PC-9 (cell line): ENCODE measurements at regions of chr10 and their contacts with region 1.

Region 1: DNA sequence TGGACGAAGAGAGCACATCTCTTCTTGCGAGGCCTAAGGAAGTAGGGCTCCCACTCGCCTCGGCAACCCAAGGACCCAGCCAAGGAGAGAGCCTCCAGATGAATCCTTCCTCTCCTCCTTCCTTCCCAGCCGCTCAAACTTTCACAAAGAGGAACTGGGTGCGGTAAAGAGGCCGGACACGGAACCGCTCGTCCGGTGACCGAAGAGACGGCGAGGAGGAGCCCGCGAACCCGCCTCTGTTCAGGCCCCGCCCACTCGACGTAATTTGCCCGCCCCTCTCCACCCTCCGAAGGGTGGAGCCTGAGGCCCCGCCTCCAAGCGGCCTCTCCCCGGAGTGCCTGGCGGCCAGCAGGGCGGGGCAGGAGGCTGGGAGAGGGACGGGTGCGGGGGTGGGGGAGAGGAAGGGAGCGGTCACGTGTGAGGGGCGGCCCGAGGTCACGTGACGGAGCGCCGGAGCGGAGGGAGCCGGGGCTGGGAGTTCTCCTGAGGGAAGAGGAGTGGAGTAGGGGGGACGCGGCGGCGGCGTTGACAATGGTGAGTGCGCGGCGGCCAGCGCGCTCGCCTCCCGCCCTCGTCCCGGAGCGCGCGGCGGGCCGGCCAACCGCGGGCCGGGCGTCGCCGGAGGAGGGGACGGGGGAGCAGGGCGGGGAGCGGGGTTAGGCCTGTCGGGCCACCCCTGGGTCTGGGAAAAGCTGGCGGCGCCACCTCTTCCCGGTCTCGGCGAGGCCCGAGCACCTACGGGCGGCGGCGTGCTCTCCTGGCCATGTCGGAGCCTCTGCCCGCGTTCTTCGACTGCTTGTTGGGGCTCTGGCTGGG is at the start of gene VPS26A:
- DNase-seq: peak; percentile 91 to 100
- H3K4me3 ChIP-seq: peak within 1 kb of the TSS; percentile 61
- H3K27ac ChIP-seq: peak within 1 kb of the TSS; percentile 78
- H3K4me1 ChIP-seq: peaks cover 19% of the 10 kb centered on the region
- H3K27me3 ChIP-seq: no peaks in the 10 kb centered on the region
- CTCF ChIP-seq: 0 out of 2 replicates have a peak, but pooled peaks have one; percentile 20
- total RNA-seq, gene VPS26A: 90.0 and 102 TPM in 2 replicates

Region 2: DNA sequence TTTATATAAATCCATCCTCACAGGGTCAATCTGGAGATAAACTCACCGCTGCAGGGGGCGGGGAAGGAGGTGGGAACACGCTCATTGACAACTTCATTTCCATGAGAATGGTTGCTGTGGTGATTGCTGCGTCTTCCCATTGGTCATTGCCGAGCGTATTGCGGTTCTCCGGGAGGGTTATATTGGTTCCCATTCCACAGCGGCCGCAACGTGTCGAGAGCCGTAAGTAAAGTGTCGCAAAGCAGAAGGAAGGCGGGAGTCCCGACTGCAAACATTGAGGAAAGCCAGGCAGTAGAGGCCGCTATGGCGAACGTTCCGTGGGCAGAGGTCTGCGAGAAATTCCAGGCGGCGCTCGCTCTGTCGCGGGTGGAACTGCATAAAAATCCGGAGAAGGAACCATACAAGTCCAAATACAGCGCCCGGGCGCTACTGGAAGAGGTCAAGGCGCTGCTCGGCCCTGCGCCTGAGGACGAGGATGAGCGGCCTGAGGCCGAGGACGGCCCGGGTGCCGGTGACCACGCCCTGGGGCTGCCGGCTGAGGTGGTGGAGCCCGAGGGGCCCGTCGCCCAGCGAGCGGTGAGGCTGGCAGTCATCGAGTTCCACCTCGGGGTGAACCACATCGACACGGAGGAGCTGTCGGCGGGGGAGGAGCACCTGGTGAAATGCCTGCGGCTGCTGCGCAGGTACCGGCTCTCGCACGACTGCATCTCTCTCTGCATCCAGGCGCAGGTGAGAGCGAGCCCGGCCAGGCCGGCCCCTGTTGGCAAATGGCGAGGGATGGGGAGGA is 135.2 kb before region 1 on chr10 and contains the start of gene KIFBP:
- CTCF ChIA-PET with region 1: interaction called, 3 read pairs
- POLR2A ChIA-PET with region 1: interaction called, 9 read pairs
- intact Hi-C with region 1: loop called (anchors 1 kb)
- DNase-seq: peak; percentile 94 to 97
- H3K4me3 ChIP-seq: peak within 1 kb of the TSS; percentile 84
- H3K27ac ChIP-seq: 0 out of 2 replicates have a peak within 1 kb of the TSS, but pooled peaks have one; percentile 20
- H3K4me1 ChIP-seq: peaks cover 19% of the 10 kb centered on the region
- H3K27me3 ChIP-seq: no peaks in the 10 kb centered on the region
- CTCF ChIP-seq: peak; percentile 62; the same call in 1 of the 2 replicates
- total RNA-seq, gene KIFBP: 26.0 and 30.1 TPM in 2 replicates

Region 3: DNA sequence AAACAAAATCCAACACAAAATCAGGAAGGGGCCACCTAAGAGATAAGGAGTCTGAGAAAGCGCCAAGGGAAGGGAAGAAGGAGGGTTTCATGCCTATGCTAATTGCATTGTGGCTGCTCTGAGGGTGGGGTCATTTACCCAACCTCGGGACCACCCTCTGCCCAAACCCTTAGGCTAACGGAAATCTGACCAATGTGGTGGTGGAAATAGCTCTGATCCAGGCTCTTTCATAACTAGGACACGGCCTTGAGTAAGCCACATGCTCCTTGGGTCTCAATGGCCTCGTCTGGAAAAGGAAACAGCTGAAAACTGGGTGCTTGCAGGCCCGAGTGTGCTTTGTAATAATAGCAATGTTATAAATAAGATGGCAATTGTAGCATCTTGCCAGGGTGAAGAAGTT is 50.9 kb before region 1 on chr10:
- CTCF ChIA-PET with region 1: no interaction called
- POLR2A ChIA-PET with region 1: no interaction called
- intact Hi-C with region 1: no loop called
- DNase-seq: no peak
- H3K4me3 ChIP-seq: no peak overlapping the region
- H3K27ac ChIP-seq: no peak overlapping the region
- H3K4me1 ChIP-seq: no peaks in the 10 kb centered on the region
- H3K27me3 ChIP-seq: no peaks in the 10 kb centered on the region
- CTCF ChIP-seq: no peak

Region 4: DNA sequence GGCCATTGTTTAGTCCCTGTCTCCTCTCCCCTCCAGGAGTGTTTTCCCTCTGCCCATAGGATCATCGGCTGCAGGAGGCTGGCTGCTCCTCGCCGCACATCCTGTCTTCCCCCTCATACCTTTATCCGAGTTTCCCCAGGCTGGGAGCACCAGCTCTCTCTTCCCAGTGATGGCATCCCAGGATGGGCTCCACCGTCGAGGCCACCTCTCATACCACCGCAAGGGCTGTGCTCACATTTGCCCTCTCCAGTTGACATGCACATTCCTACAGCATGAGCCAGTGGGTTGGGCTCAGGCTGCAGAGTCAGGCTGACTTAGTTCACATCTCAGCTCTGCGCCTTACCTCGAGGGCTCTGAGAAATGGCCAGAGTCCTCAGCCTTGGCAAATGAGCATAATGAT is 108.3 kb after region 1 on chr10:
- CTCF ChIA-PET with region 1: no interaction called
- POLR2A ChIA-PET with region 1: interaction called, 3 read pairs
- intact Hi-C with region 1: loop called (anchors 2 kb)
- DNase-seq: peak; percentile 88 to 96
- H3K4me3 ChIP-seq: peak overlapping the region; percentile 72
- H3K27ac ChIP-seq: peak overlapping the region; percentile 96
- H3K4me1 ChIP-seq: peaks cover 73% of the 10 kb centered on the region
- H3K27me3 ChIP-seq: no peaks in the 10 kb centered on the region
- CTCF ChIP-seq: no peak

Region 5: DNA sequence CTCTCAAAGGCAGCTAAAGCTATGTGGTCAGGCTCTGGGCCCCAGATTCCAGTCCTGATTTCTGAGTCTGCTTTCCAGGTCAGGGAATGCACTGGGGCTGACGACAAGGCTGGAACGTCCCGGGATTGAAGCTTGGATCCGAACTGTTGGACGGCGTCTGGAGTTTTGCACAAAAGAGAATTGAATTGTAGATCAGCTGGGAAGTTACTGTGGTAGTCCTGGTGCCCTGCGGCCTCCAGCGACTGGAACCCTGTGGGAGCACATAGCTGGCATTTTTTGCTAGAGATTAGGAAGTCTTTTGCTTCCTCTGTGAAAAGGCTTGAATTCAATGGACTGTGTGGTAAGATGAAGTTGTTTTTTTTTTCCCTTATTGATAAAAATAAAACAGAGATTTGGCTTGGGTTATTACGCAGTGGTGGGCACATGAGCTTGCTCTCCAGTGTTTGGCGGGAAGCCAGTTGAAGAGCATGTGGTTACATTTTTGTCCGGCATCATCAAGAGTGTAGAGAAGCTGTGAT is 154.6 kb after region 1 on chr10 and contains the start of gene HK1:
- CTCF ChIA-PET with region 1: interaction called, 10 read pairs
- POLR2A ChIA-PET with region 1: no interaction called
- intact Hi-C with region 1: no loop called
- DNase-seq: no peak
- H3K4me3 ChIP-seq: no peak within 1 kb of the TSS
- H3K27ac ChIP-seq: no peak within 1 kb of the TSS
- H3K4me1 ChIP-seq: no peaks in the 10 kb centered on the region
- H3K27me3 ChIP-seq: no peaks in the 10 kb centered on the region
- CTCF ChIP-seq: no peak
- total RNA-seq, gene HK1: 128 and 140 TPM in 2 replicates

Region 6: DNA sequence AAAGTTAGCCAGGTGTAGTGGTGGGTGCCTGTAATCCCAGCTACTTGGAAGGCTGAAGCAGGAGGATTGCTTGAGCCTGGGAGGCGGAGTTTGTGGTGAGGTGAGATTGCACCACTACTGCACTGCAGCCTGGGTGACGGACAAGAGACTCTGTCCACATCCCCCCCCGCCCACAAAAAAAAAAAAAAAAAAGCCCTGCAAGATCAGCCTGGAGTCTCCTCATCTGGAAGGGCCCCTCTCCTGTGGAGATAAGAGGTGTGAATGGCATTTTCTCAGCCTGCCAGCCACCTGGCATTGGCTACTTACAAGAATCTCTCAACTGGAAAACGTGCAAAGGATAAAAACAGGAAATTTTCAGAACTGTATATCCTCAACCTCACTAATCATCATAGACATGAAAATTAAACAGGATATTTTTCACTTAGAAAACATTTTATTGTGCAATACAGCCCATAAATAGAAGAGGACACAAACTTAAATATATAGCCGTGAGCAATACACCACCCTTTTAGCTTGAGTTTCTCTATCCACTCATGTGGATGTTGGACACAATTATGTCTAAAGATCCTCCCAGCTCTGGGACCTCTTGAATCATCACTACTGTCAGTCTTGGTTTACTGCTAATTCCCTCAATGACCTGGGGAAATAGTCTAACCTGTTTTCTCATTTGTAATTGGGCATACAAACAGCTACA is 316.0 kb after region 1 on chr10:
- CTCF ChIA-PET with region 1: interaction called, 12 read pairs
- POLR2A ChIA-PET with region 1: no interaction called
- intact Hi-C with region 1: no loop called
- DNase-seq: peak; percentile 81 to 96
- H3K4me3 ChIP-seq: peak overlapping the region; percentile 42; the same call in 1 of the 2 replicates
- H3K27ac ChIP-seq: peak overlapping the region; percentile 96
- H3K4me1 ChIP-seq: peaks cover 69% of the 10 kb centered on the region
- H3K27me3 ChIP-seq: no peaks in the 10 kb centered on the region
- CTCF ChIP-seq: 0 out of 2 replicates have a peak, but pooled peaks have one; percentile 4